Endothelial cell of umbilical vein (primary cell): ENCODE measurements at regions of chr14 and their contacts with region 1.

Region 1: GRCh38 chr14:62800577-62800976 is 244.7 kb downstream of the KCNH5 start:
- DNase-seq: no peak
- H3K4me3 ChIP-seq: no peak overlapping the region
- H3K27ac ChIP-seq: no peak overlapping the region
- H3K4me1 ChIP-seq: no peaks in the 10 kb centered on the region
- H3K27me3 ChIP-seq: no peaks in the 10 kb centered on the region
- CTCF ChIP-seq: no peak
- POLR2A ChIP-seq: no peak

Region 2: GRCh38 chr14:62778847-62779246 is 21.7 kb before region 1 on chr14:
- CTCF ChIA-PET with region 1: no interaction called
- POLR2A ChIA-PET with region 1: no interaction called
- dilution Hi-C with region 1: no loop called
- intact Hi-C with region 1: no loop called
- DNase-seq: no peak
- H3K4me3 ChIP-seq: no peak overlapping the region
- H3K27ac ChIP-seq: no peak overlapping the region
- H3K4me1 ChIP-seq: no peaks in the 10 kb centered on the region
- H3K27me3 ChIP-seq: no peaks in the 10 kb centered on the region
- CTCF ChIP-seq: no peak
- POLR2A ChIP-seq: no peak

Region 3: GRCh38 chr14:62847168-62847567 is 46.6 kb after region 1 on chr14:
- CTCF ChIA-PET with region 1: no interaction called
- POLR2A ChIA-PET with region 1: no interaction called
- dilution Hi-C with region 1: no loop called
- intact Hi-C with region 1: no loop called
- DNase-seq: no peak
- H3K4me3 ChIP-seq: no peak overlapping the region
- H3K27ac ChIP-seq: no peak overlapping the region
- H3K4me1 ChIP-seq: no peaks in the 10 kb centered on the region
- H3K27me3 ChIP-seq: no peaks in the 10 kb centered on the region
- CTCF ChIP-seq: no peak
- POLR2A ChIP-seq: no peak

Region 4: GRCh38 chr14:63011601-63012000 is 211.0 kb after region 1 on chr14:
- CTCF ChIA-PET with region 1: no interaction called
- POLR2A ChIA-PET with region 1: interaction called, 12 read pairs
- dilution Hi-C with region 1: no loop called
- intact Hi-C with region 1: no loop called
- DNase-seq: no peak
- H3K4me3 ChIP-seq: no peak overlapping the region
- H3K27ac ChIP-seq: no peak overlapping the region
- H3K4me1 ChIP-seq: no peaks in the 10 kb centered on the region
- H3K27me3 ChIP-seq: peaks cover 3 to 4% of the 10 kb centered on the region in 2 experiments
- CTCF ChIP-seq: no peak
- POLR2A ChIP-seq: no peak